Breast epithelium (tissue), 4 donors: ENCODE measurements at regions of chr5 and their contacts with region 1.

Region 1: GRCh38 chr5:170691657-170692056 is 91.9 kb upstream of the GABRP start:
- DNase-seq: no peak
- H3K4me3 ChIP-seq: no peak overlapping the region
- H3K27ac ChIP-seq: no peak overlapping the region
- H3K4me1 ChIP-seq: no peaks in the 10 kb centered on the region
- H3K27me3 ChIP-seq: peaks cover 0 to 21% of the 10 kb centered on the region in 2 donors
- CTCF ChIP-seq: no peak
- POLR2A ChIP-seq: no peak

Region 2: GRCh38 chr5:170623576-170624181 is 68.0 kb before region 1 on chr5:
- intact Hi-C with region 1: no loop called
- DNase-seq: peak in 1 of 2 donors; percentile 44
- H3K4me3 ChIP-seq: no peak overlapping the region
- H3K27ac ChIP-seq: no peak overlapping the region
- H3K4me1 ChIP-seq: no peaks in the 10 kb centered on the region
- H3K27me3 ChIP-seq: no peaks in the 10 kb centered on the region
- CTCF ChIP-seq: peak in 2 of 3 donors; percentile 27 to 31
- POLR2A ChIP-seq: no peak

Region 3: DNA sequence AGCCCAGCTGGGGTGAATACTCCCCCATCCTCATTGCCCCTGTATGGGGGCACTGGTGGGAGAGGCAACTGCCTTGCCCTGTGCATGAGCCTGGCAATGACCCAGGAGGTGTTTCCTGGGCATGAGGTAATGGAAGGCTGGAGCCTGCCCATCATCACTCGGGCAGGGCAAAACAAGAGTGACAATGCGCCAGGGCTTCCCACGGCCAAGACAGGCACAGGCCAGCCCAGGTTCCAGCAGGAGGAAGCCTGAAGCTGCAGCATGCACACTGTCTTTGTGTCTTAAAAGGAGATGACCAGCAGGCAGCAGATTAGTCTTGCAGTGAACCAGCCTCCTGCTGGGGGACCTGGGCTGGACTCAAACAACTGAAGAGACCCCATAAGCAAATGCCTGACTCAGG is 1001.8 kb after region 1 on chr5:
- intact Hi-C with region 1: loop called (anchors 10 kb)
- DNase-seq: no peak
- H3K4me3 ChIP-seq: no peak overlapping the region
- H3K27ac ChIP-seq: no peak overlapping the region
- H3K4me1 ChIP-seq: no peaks in the 10 kb centered on the region
- H3K27me3 ChIP-seq: no peaks in the 10 kb centered on the region
- CTCF ChIP-seq: no peak
- POLR2A ChIP-seq: no peak